Right ventricle myocardium superior (tissue), 1 donor: ENCODE measurements at regions of chr4 and their contacts with region 1.

Region 1: DNA sequence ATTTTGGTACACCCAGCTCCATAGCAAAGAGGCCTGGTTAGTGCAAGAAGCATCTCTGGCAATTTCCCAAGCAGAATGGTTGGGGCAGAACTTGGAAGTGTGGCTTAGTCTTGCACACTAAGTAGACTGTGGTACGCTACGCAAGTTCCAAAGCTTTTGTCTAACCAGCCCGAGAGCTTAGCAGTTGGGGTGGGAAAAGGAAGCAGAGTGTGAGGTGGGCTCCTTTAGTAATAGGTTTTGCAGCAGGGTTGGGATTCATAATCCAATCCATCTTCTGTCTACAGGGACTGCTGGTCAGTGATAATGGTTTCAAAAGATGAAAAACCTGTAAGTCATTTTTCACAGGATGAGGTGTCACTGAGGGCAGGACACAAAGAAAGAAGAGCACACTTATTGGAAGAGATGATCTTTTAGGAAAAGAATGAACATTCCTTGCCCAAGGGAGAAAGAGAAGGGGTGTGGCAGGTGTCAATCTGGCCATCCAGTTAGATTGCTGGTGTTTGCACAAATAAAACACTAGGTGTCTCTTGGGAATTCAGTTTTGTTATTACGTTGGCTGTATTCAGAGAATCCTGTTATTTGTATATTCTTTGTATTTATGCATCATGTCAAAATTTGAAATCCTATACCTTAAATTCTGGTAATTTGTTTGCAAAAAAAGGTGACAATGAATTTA is 244.3 kb downstream of the GPAT3 start:
- DNase-seq: no peak
- ATAC-seq: no peak

Region 2: DNA sequence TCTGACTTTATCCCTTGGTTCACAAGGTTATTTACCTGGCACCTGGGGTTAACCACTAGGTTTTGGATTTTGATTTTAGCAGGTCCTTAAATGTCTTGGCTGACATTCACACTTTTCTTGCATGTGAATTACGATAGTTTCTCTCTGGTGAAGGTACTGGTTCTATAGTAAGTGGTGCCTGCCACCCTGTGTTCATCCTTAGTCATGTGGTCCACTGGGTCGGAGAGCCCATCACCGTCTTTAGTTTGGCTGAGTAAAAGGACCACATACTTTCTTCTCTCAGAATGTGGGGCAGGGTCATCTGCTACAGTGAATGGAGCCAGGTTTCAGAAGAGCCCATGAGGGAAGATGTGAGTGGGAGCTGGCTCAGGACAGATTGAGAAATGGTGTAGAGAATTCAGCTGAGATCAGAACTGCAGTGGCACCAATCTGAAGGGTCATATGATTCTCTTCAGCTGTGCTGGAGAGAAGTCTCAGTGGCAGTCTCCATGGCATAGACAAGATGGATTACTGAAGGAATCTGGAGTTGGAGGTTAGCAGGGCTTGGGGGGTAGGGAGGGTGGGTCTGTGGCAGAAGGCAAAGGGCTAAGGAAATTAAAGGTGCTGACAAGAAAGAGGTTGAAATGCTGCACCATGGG is 66.1 kb after region 1 on chr4:
- intact Hi-C with region 1: loop called (anchors 2 kb)
- DNase-seq: no peak
- ATAC-seq: peak; percentile 85